ENCODE measurements at regions of chr14 and their contacts with region 1.

Region 1: GRCh38 chr14:55212634-55213033 is 21.2 kb upstream of the DLGAP5 start:
- DNase-seq: no peak
- H3K4me3 ChIP-seq: no peak overlapping the region
- H3K27ac ChIP-seq: no peak overlapping the region
- H3K27me3 ChIP-seq: no peaks in the 10 kb centered on the region
- CTCF ChIP-seq: no peak

Region 2: GRCh38 chr14:55117803-55118441 is 94.7 kb before region 1 on chr14:
- CTCF ChIA-PET with region 1: no interaction called
- POLR2A ChIA-PET with region 1: no interaction called
- DNase-seq: no peak
- H3K4me3 ChIP-seq: no peak overlapping the region
- H3K27ac ChIP-seq: no peak overlapping the region
- H3K27me3 ChIP-seq: no peaks in the 10 kb centered on the region
- CTCF ChIP-seq: no peak

Region 3: DNA sequence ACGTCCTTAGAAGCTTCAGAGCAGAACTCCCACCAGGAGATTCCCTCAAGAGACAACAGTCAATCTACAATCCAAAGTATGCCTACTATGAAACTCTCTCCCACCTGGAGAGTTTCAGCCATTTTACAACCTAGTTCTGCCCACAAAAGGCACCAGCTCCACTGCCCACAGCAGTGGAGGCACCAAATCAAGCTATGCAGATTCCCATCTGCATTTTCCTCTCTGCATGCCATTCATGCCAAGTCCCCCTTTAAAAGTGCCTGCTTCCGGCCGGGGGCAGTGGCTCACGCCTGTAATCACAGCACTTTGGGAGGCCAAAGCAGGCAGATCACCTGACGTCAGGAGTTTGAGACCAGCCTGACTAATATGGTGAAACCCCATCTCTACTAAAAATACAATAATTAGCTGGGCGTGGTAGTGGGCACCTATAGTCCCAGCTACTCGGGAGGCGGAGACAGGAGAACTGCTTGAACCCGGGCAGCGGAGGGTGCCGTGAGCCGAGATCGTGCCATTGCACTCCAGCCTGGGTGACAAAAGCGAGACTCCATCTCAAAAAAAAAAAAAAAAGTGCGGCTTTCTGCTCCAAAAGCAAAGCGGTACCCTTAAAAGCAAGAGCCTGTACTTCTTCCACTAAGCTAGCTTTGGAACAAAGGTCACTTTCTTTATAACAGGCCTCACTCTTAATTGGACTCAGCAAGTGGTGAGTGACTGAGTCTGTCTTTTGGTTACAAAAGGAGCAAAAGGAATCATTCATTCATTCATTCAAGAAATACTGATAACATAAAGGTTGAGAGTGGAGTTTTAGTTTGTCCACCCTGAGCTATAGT is 11.2 kb before region 1 on chr14:
- CTCF ChIA-PET with region 1: interaction called, 11 read pairs
- POLR2A ChIA-PET with region 1: no interaction called
- DNase-seq: no peak
- H3K4me3 ChIP-seq: no peak overlapping the region
- H3K27ac ChIP-seq: no peak overlapping the region
- H3K27me3 ChIP-seq: no peaks in the 10 kb centered on the region
- CTCF ChIP-seq: no peak

Region 4: DNA sequence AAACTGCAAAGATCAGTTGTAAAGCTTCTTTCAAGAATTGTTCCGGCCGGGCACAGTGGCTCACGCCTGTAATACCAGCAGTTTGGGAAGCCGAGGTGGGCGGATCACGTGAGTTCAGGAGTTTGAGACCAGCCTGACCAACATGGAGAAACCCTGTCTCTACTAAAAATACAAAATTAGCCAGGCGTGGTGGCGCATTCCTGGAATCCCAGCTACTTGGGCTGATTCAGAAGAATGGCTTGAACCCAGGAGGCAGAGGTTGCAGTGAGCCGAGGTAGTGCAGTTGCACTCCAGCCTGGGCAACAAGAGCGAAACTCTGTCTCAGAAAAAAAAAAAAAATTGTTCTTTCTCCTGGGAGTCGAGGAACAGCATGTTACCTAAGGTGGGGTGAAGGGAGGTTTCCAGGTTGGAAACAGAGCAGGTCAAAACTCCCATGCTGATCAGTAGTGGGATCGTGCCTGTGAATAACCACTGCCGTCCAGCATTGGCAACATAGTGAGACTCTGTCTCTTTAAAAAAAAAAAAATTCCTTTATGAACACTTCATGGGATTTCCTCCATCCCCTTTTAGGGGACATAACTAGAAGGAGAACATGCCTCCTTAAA is 72.5 kb after region 1 on chr14:
- CTCF ChIA-PET with region 1: no interaction called
- POLR2A ChIA-PET with region 1: no interaction called
- DNase-seq: no peak
- H3K4me3 ChIP-seq: no peak overlapping the region
- H3K27ac ChIP-seq: no peak overlapping the region
- H3K27me3 ChIP-seq: no peaks in the 10 kb centered on the region
- CTCF ChIP-seq: no peak

Region 5: DNA sequence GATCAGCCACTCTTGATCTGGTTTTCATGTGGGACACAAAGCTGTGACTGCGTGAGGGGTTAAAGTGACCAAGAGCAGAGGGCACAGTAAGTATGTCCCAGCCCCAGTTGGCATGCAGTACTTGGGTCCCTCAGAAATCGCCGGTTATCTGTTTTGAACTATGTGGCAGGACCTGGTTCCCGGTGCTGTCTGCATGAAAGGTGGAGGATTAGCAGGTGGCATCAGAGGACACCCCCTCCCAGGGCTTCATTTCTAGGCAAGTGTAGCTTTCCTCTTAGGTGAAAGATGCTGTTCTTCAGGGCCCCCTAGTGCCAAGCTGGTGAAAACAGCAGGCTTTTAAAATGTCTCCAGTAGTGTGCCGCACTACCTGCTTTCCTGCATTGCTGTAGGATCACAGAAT is 141.9 kb after region 1 on chr14:
- CTCF ChIA-PET with region 1: interaction called, 20 read pairs
- POLR2A ChIA-PET with region 1: no interaction called
- DNase-seq: no peak
- H3K4me3 ChIP-seq: no peak overlapping the region
- H3K27ac ChIP-seq: no peak overlapping the region
- H3K27me3 ChIP-seq: no peaks in the 10 kb centered on the region
- CTCF ChIP-seq: peak; percentile 71

Region 6: GRCh38 chr14:55430024-55430690 is 217.5 kb after region 1 on chr14:
- CTCF ChIA-PET with region 1: interaction called, 21 read pairs
- POLR2A ChIA-PET with region 1: no interaction called
- DNase-seq: peak; percentile 67
- H3K4me3 ChIP-seq: no peak overlapping the region
- H3K27ac ChIP-seq: no peak overlapping the region
- H3K27me3 ChIP-seq: peaks cover 3% of the 10 kb centered on the region
- CTCF ChIP-seq: peak; percentile 64

Measured in AG04450 (cell line).